WTC11 (cell line): ENCODE measurements at regions of chr3 and their contacts with region 1.

Region 1: DNA sequence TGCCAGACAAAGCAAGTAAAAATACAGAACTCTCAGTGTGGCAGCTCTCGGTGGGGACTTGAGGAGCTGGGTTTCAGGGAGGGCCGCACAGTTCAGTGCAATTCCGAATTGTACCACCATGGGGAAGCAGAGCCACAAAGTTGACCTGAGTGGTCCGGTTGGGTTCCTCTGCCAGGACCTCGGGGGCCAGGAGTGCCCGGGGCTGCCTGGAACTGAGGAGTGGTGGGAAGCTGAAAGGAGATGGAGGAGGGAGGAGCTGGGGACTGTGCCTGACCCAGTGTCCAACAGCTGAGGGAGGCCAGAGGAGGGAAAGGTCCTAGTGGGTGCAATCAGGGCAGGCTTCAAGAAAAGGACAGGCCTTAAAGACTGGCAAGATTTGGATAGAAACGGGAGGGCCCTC is 32.2 kb upstream of the TRH start:
- DNase-seq: peak; percentile 88
- ATAC-seq: peak; percentile 97
- H3K4me3 Mint-ChIP-seq: no peak overlapping the region
- H3K27ac Mint-ChIP-seq: no peak overlapping the region
- H3K4me1 Mint-ChIP-seq: peaks cover 9% of the 10 kb centered on the region
- H3K27me3 Mint-ChIP-seq: peaks cover 12% of the 10 kb centered on the region
- CTCF ChIP-seq: peak; percentile 59

Region 2: DNA sequence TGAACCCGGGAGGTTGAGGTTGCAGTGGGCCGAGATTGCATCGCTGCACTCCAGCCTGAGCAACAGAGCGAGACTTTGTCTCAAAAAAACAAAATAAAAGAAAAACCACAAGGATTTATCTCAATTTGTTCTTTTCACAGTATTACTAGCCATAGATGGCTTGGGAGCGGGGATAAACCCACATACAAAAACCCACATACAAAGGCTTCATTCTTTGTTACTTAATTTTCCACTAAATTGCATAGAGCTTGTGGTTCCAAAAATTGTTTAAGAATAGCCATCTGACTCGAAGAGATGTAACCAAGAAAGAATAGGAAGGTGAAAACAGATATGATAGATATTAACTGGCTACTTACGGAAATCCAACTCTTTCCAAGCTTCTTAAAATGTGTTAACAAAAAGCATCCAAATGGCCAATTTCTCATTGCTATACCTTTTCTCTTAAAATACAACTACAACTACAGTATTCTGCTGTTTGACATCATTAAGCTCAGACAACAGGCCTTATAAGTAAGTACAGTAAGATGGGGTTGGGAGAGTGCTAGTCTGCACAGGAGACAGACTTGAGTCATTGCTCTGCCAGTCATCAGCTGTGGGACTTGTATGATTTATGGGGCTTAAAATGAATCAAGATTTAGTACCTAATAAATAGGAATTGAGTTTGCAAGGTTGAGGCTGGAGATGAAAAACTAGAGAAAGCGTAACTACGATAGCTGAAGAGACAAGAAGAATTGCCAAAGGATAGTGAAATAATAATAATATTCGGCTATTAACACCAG is 239.2 kb before region 1 on chr3:
- CTCF ChIA-PET with region 1: no interaction called
- POLR2A ChIA-PET with region 1: no interaction called
- DNase-seq: no peak
- ATAC-seq: no peak
- H3K4me3 Mint-ChIP-seq: no peak overlapping the region
- H3K27ac Mint-ChIP-seq: no peak overlapping the region
- H3K4me1 Mint-ChIP-seq: peaks cover 29% of the 10 kb centered on the region
- H3K27me3 Mint-ChIP-seq: no peaks in the 10 kb centered on the region
- CTCF ChIP-seq: no peak

Region 3: GRCh38 chr3:129954514-129954913 is 12.2 kb after region 1 on chr3:
- CTCF ChIA-PET with region 1: interaction called, 14 read pairs
- POLR2A ChIA-PET with region 1: interaction called, 3 read pairs
- DNase-seq: no peak
- ATAC-seq: no peak
- H3K4me3 Mint-ChIP-seq: no peak overlapping the region
- H3K27ac Mint-ChIP-seq: no peak overlapping the region
- H3K4me1 Mint-ChIP-seq: no peaks in the 10 kb centered on the region
- H3K27me3 Mint-ChIP-seq: peaks cover 24% of the 10 kb centered on the region; the same call in 1 of the 2 replicates
- CTCF ChIP-seq: no peak

Region 4: GRCh38 chr3:129975038-129975704 is 32.9 kb after region 1 on chr3:
- CTCF ChIA-PET with region 1: interaction called, 52 read pairs
- POLR2A ChIA-PET with region 1: no interaction called
- DNase-seq: no peak
- ATAC-seq: peak; percentile 14
- H3K4me3 Mint-ChIP-seq: peak overlapping the region; percentile 73
- H3K27ac Mint-ChIP-seq: no peak overlapping the region
- H3K4me1 Mint-ChIP-seq: peaks cover 25% of the 10 kb centered on the region
- H3K27me3 Mint-ChIP-seq: peaks cover 100% of the 10 kb centered on the region
- CTCF ChIP-seq: no peak

Region 5: GRCh38 chr3:129992781-129993180 is 50.5 kb after region 1 on chr3:
- CTCF ChIA-PET with region 1: interaction called, 67 read pairs
- POLR2A ChIA-PET with region 1: no interaction called
- DNase-seq: peak; percentile 37
- ATAC-seq: peak; percentile 94
- H3K4me3 Mint-ChIP-seq: no peak overlapping the region
- H3K27ac Mint-ChIP-seq: no peak overlapping the region
- H3K4me1 Mint-ChIP-seq: peaks cover 8% of the 10 kb centered on the region
- H3K27me3 Mint-ChIP-seq: peaks cover 38% of the 10 kb centered on the region
- CTCF ChIP-seq: peak; percentile 17; the same call in 1 of the 2 replicates

Region 6: DNA sequence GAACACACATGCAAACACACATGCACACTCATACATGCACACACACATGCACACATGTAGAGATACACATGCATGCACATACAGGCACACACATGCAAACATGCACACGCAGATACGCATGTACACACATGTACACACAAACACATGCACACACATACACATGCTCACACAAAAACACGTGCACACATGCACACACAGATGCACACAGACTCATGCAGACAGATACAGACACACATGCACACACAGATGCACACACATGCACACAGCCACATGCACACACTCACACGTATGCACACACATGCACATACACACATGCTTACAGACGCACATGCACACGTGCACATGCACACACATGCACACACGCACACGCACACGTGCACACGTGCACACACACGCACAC is 102.1 kb after region 1 on chr3:
- CTCF ChIA-PET with region 1: no interaction called
- POLR2A ChIA-PET with region 1: no interaction called
- DNase-seq: no peak
- ATAC-seq: no peak
- H3K4me3 Mint-ChIP-seq: no peak overlapping the region
- H3K27ac Mint-ChIP-seq: no peak overlapping the region
- H3K4me1 Mint-ChIP-seq: no peaks in the 10 kb centered on the region
- H3K27me3 Mint-ChIP-seq: peaks cover 4% of the 10 kb centered on the region
- CTCF ChIP-seq: no peak

Region 7: DNA sequence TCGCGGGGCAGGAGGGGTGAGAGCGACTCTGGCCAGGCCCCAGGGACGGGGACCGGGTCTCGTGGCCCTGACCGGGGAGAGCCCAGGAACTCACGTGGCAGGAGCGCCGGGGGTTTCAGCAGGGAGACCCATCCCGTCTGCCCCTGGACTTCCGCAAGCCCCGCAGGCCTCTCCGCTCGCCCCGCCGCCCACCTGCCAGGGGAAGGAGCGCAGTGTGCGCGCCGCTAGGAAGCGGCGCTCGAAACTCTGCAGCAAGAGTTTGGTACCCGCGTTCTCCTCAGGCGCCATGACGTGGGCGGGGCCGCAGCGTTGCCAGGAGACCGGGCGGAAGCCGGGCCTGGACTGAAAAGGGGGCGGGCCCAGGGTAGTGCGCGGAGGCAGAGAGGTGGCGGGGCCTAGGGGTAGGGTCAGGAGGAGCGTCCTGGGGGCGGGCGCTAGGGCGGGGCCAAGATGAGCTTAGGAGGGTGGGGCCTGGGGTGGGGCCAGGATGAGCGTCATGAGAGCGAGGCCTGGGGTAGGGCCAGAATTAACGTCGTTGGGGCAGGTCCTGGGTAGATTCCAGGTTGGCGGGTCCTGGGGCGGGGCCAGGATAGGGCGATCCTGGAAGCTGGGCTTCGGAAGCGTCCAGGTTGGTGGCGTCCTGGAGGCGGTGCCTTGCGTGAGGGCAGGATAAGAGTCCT is 169.0 kb after region 1 on chr3:
- CTCF ChIA-PET with region 1: interaction called, 26 read pairs
- POLR2A ChIA-PET with region 1: no interaction called
- DNase-seq: peak; percentile 99
- ATAC-seq: peak; percentile 100
- H3K4me3 Mint-ChIP-seq: peak overlapping the region; percentile 94
- H3K27ac Mint-ChIP-seq: peak overlapping the region; percentile 84
- H3K4me1 Mint-ChIP-seq: peaks cover 21% of the 10 kb centered on the region
- H3K27me3 Mint-ChIP-seq: no peaks in the 10 kb centered on the region
- CTCF ChIP-seq: no peak